Caco-2 (cell line): ENCODE measurements at regions of chr14 and their contacts with region 1.

Region 1: DNA sequence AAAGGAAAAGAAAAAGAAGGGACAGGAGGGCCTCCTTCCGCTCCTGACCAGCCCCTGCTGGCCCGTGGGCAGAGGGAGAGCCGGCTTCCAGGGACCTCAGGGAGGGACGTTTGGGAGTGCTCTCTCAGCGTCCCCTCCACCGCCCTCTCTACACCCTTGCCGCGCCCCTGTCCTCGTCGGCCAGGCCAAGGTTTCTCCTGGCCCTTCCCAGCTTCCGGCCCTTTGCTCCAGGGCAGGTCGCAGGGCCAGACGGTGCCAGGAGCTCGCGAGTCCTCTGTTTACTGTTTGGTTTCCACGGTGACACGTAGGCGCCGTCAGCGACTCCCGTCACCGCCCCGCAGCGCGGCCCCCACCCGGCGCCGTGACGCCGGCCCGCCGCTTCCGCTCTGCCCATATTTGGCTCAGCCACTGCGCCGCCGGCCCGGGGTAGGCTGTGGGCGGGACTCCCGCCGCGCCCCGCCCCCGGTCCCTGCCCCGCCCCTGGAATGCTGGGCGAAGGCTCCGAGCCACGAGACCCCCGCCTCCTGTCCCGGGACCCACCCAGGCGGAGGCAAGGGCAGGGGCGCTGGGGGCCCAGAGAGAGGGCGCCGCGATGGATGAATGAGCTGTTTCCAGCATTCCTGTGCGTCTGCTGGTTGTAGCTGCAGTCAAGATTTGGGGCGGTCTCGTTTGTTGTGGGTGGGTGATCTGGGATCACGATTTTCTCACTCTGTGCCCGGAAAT is 15.5 kb downstream of the FOS start:
- DNase-seq: peak; percentile 98
- H3K4me3 ChIP-seq: peak overlapping the region; percentile 40
- H3K4me3 Mint-ChIP-seq: peak overlapping the region; percentile 71
- H3K27ac Mint-ChIP-seq: peak overlapping the region; percentile 86
- H3K4me1 ChIP-seq: peaks cover 18% of the 10 kb centered on the region
- H3K4me1 Mint-ChIP-seq: peaks cover 6% of the 10 kb centered on the region
- H3K27me3 ChIP-seq: no peaks in the 10 kb centered on the region
- H3K27me3 Mint-ChIP-seq: no peaks in the 10 kb centered on the region
- CTCF ChIP-seq: peak in 1 of 2 experiments; percentile 14

Region 2: GRCh38 chr14:75132382-75133086 is 161.5 kb before region 1 on chr14:
- CTCF ChIA-PET with region 1: interaction called, 7 read pairs
- POLR2A ChIA-PET with region 1: interaction called, 11 read pairs
- intact Hi-C with region 1: loop called (anchors 1 kb)
- DNase-seq: peak; percentile 62 to 80
- H3K4me3 ChIP-seq: no peak overlapping the region
- H3K4me3 Mint-ChIP-seq: no peak overlapping the region
- H3K27ac Mint-ChIP-seq: peak overlapping the region; percentile 51
- H3K4me1 ChIP-seq: 0 out of 2 replicates have a peak, but pooled peaks cover 7% of the 10 kb centered on the region
- H3K4me1 Mint-ChIP-seq: no peaks in the 10 kb centered on the region
- H3K27me3 ChIP-seq: no peaks in the 10 kb centered on the region
- H3K27me3 Mint-ChIP-seq: no peaks in the 10 kb centered on the region
- CTCF ChIP-seq: peak; percentile 62 to 75

Region 3: GRCh38 chr14:75230140-75231045 is 63.7 kb before region 1 on chr14:
- CTCF ChIA-PET with region 1: no interaction called
- POLR2A ChIA-PET with region 1: no interaction called
- intact Hi-C with region 1: loop called (anchors 10 kb)
- DNase-seq: no peak
- H3K4me3 ChIP-seq: no peak overlapping the region
- H3K4me3 Mint-ChIP-seq: no peak overlapping the region
- H3K27ac Mint-ChIP-seq: peak overlapping the region; percentile 9
- H3K4me1 ChIP-seq: peaks cover 33% of the 10 kb centered on the region
- H3K4me1 Mint-ChIP-seq: peaks cover 36% of the 10 kb centered on the region
- H3K27me3 ChIP-seq: no peaks in the 10 kb centered on the region
- H3K27me3 Mint-ChIP-seq: no peaks in the 10 kb centered on the region
- CTCF ChIP-seq: peak in 1 of 2 experiments; percentile 22

Region 4: GRCh38 chr14:75258615-75259466 is 35.2 kb before region 1 on chr14:
- CTCF ChIA-PET with region 1: interaction called, 4 read pairs
- POLR2A ChIA-PET with region 1: interaction called, 49 read pairs
- intact Hi-C with region 1: loop called (anchors 1 kb)
- DNase-seq: peak; percentile 99
- H3K4me3 ChIP-seq: peak overlapping the region; percentile 57
- H3K4me3 Mint-ChIP-seq: peak overlapping the region; percentile 93
- H3K27ac Mint-ChIP-seq: peak overlapping the region; percentile 100
- H3K4me1 ChIP-seq: peaks cover 12% of the 10 kb centered on the region
- H3K4me1 Mint-ChIP-seq: peaks cover 8% of the 10 kb centered on the region
- H3K27me3 ChIP-seq: no peaks in the 10 kb centered on the region
- H3K27me3 Mint-ChIP-seq: no peaks in the 10 kb centered on the region
- CTCF ChIP-seq: no peak

Region 5: GRCh38 chr14:75359098-75359497 is 65.0 kb after region 1 on chr14:
- CTCF ChIA-PET with region 1: no interaction called
- POLR2A ChIA-PET with region 1: no interaction called
- intact Hi-C with region 1: no loop called
- DNase-seq: no peak
- H3K4me3 ChIP-seq: no peak overlapping the region
- H3K4me3 Mint-ChIP-seq: no peak overlapping the region
- H3K27ac Mint-ChIP-seq: no peak overlapping the region
- H3K4me1 ChIP-seq: peaks cover 8% of the 10 kb centered on the region; the same call in 1 of the 2 replicates
- H3K4me1 Mint-ChIP-seq: peaks cover 19% of the 10 kb centered on the region
- H3K27me3 ChIP-seq: no peaks in the 10 kb centered on the region
- H3K27me3 Mint-ChIP-seq: no peaks in the 10 kb centered on the region
- CTCF ChIP-seq: no peak